Gastrocnemius medialis (tissue), 4 donors: ENCODE measurements at regions of chr14 and their contacts with region 1.

Region 1: DNA sequence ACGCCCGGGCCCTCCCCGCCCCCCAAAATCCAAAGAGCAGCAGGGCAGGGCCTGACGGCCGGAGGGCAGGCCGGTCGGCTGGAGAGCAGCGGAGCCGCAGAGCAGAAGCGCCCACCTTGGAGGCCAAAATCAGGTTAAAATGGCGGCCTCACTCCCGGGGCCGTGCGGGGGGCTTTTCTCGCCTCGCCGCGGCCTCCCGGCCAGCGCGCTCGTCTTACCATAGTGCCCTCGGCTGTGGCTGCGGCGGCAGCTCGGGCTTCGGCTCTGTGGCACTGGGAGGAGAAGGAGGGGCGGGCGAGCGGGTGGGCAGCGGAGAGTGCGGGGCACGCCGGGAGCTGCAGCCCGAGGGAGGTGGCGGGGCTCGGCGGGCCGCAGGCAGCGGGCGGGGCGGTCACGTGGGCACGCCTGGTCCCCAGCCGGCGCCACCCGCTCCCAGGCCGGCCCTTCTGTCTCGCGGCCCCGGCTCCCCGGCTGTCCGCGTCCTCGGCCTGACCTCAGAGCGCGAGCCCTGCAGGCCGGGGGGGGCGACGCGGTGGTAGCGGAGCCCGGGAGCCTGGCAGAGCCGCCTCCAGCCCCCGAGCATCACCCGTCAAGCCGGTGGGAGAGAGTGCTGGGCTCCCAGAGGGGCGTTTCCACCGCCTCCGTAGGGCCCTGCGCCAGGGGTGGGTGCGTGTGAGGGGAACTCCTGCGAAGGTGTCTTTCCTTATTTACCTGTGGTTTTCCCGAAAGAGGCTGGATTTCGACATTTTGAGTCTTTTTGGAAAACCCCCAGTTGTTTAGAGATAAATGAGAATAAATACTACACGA is at the start of gene CFL2:
- DNase-seq: peak; percentile 77 to 91
- ATAC-seq: peak; percentile 70 to 73
- H3K4me3 ChIP-seq: peak within 1 kb of the TSS; percentile 74 to 97 (median 94)
- H3K27ac ChIP-seq: peak within 1 kb of the TSS; percentile 96 to 100 (median 98)
- H3K4me1 ChIP-seq: peaks cover 34 to 45% of the 10 kb centered on the region in 2 donors
- H3K27me3 ChIP-seq: no peaks in the 10 kb centered on the region
- CTCF ChIP-seq: no peak
- POLR2A ChIP-seq: peak; percentile 87 to 89
- total RNA-seq, gene CFL2: 331 to 434 (median 371) TPM

Region 2: DNA sequence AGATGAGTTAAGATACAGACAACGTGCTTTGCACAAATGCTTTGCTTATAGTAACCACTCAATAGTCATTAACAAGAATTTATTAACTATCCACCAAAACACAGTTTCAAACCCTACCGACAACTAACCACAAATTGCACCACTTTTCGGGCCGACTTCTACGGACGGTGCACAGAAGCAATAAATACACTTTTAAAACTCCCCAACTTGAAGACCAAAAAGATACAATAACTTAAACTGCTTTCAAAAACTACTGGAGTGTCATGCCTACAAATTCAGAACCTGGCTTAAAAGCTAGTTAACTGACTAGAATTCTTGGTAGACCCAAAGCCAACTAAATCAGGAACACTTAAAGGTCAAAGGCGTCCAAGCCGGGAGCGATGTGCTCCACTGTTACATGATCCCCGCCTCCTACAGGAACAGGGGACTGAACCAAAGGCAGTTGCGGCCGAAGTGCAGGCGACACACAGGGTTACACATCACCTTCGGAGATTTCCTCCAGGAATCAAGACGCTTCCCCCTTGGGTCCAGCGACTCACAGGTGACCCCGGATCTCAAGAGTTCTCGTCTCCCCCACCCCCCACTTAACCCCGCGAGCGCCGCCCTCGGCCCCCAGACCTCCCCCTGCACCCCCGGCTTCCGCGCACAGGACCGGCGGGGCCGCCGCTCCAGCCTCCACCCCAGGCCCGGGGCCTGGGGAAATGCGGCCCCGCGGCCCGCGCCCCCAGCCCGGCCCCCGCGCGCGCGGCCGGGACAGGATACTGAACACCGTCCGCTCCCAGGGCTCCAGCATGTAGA is 253.0 kb before region 1 on chr14:
- in situ Hi-C with region 1: no loop called
- intact Hi-C with region 1: loop called (anchors 10 kb)
- DNase-seq: peak; percentile 37 to 66
- ATAC-seq: peak; percentile 73 to 78
- H3K4me3 ChIP-seq: peak overlapping the region; percentile 53 to 73 (median 62)
- H3K27ac ChIP-seq: peak overlapping the region; percentile 89 to 91 (median 90)
- H3K4me1 ChIP-seq: peaks cover 12 to 21% of the 10 kb centered on the region in 2 donors
- H3K27me3 ChIP-seq: no peaks in the 10 kb centered on the region
- CTCF ChIP-seq: no peak
- POLR2A ChIP-seq: no peak

Region 3: DNA sequence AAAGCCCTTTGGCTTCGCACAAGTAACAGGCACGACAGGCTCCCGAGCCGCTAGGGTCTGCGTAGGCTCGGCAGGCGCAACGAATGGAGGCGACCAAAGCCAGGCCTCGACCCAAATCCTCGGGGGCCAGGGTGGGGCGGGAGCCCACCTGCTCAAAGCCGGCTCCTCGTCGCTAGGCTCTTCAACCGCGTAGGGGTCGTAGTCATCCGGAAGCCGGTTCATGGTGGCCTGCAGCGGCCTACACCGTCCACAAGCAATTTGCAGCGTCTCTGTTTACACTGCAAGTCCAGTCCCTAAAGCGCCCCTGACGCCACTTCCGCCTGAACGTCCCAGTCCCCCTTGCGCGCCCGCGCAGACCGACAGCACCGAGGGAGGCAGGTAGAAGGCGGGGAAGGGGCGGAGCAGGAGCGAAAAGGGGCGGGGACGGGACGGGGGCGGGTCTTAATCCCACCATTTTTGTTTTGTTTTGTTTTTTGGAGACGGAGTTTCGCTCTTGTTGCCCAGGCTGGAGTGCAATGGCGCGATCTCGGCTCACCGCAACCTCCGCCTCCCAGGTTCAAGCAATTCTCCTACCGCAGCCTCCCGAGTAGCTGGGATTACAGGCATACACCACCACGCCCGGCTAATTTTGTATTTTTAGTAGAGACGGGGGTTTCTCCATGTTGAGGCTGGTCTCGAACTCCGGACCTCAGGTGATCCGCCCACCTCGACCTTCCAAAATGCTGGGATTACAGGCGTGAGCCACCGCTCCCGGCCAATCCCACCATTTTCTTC is 174.9 kb before region 1 on chr14 and contains the start of gene EAPP:
- in situ Hi-C with region 1: no loop called
- intact Hi-C with region 1: loop called (anchors 5 kb)
- DNase-seq: peak; percentile 99
- ATAC-seq: peak; percentile 96 to 98
- H3K4me3 ChIP-seq: peak within 1 kb of the TSS; percentile 74 to 98 (median 96)
- H3K27ac ChIP-seq: peak within 1 kb of the TSS; percentile 92 to 98 (median 97)
- H3K4me1 ChIP-seq: peaks cover 18 to 19% of the 10 kb centered on the region in 2 donors
- H3K27me3 ChIP-seq: no peaks in the 10 kb centered on the region
- CTCF ChIP-seq: peak in 2 of 5 experiments; percentile 26 to 28
- POLR2A ChIP-seq: peak; percentile 90 to 96
- total RNA-seq, gene EAPP: 25.6 to 35.7 (median 28.0) TPM

Region 4: DNA sequence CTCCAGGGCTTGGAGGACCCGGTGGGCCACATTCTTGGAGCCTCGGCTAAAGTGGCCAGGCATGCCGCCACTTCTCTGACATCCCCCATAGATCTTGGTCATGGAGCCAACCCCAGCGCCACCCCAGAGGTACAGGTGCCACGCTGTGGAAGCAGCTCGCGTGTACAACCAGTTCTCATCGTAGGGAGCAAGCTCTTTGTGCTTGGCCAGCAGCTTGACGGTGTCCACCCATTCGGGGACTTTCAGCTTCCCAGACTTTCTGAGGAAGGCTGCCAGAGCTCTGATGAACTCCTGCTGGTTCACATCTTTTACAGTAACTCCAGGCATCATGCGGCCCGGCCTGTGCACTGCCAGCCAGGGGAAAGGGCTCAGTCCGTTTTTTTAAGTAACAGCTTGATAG is 145.7 kb before region 1 on chr14:
- in situ Hi-C with region 1: no loop called
- intact Hi-C with region 1: no loop called
- DNase-seq: no peak
- ATAC-seq: no peak
- H3K4me3 ChIP-seq: no peak overlapping the region
- H3K27ac ChIP-seq: no peak overlapping the region
- H3K4me1 ChIP-seq: no peaks in the 10 kb centered on the region
- H3K27me3 ChIP-seq: no peaks in the 10 kb centered on the region
- CTCF ChIP-seq: no peak
- POLR2A ChIP-seq: no peak

Region 5: GRCh38 chr14:34593740-34594375 is 120.7 kb before region 1 on chr14:
- in situ Hi-C with region 1: no loop called
- intact Hi-C with region 1: loop called (anchors 2 kb)
- DNase-seq: peak in 1 of 2 donors; percentile 58
- ATAC-seq: peak; percentile 20 to 48
- H3K4me3 ChIP-seq: no peak overlapping the region
- H3K27ac ChIP-seq: peak overlapping the region; percentile 69 to 84 (median 80)
- H3K4me1 ChIP-seq: peaks cover 22 to 49% of the 10 kb centered on the region in 2 donors
- H3K27me3 ChIP-seq: no peaks in the 10 kb centered on the region
- CTCF ChIP-seq: no peak
- POLR2A ChIP-seq: no peak

Region 6: DNA sequence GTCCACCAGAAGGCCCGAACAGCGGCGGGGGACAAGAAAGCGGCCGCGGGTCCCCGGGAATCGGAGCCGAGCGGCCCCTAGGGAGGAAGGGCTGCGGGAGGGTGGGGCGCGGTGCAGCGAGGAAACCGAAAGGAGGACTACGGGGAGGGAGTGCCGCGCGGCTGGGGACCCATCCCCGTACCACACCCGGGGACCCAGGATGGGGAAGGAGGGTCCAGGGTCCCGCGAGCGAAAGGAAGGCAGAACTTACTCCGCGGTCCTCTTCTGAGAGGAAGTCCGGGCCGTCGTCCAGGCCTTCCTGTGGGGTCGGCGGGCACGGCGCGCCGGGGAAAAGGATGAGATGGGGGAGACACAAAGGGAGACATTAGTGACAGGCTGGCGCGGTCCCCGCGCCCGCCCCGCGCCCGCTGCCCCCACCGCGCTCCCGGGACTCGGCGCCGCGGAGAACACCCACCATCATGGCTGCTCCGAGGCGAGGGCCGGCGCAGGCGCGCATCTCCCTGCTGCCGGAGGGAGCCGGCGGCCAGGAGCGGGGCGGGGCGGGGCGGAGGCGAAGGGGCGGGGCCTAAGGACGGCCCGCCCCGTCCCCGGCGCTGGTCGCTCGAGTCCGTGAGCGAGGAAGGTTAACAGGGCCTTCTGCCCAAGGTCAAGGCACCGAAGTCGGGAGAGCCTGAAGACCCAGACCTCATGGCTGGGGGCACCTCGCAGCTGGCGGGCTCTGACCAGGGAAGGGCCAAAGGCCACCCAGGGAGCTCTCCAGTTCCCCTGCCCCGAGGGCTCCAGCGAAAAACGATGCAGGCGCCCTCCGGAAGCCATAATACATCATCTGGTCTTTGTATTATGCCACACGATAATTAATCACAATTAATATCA is 84.6 kb before region 1 on chr14 and contains the start of gene SNX6:
- in situ Hi-C with region 1: no loop called
- intact Hi-C with region 1: loop called (anchors 5 kb)
- DNase-seq: peak; percentile 66 to 79
- ATAC-seq: peak; percentile 96 to 98
- H3K4me3 ChIP-seq: peak within 1 kb of the TSS; percentile 93 to 99 (median 96)
- H3K27ac ChIP-seq: peak within 1 kb of the TSS; percentile 95 to 98 (median 98)
- H3K4me1 ChIP-seq: peaks cover 18 to 19% of the 10 kb centered on the region in 2 donors
- H3K27me3 ChIP-seq: no peaks in the 10 kb centered on the region
- CTCF ChIP-seq: no peak
- POLR2A ChIP-seq: peak; percentile 68 to 74
- total RNA-seq, gene SNX6: 73.8 to 113 (median 109) TPM

Region 7: GRCh38 chr14:34678306-34678705 is 36.2 kb before region 1 on chr14:
- in situ Hi-C with region 1: no loop called
- intact Hi-C with region 1: loop called (anchors 2 kb)
- DNase-seq: no peak
- ATAC-seq: no peak
- H3K4me3 ChIP-seq: peak overlapping the region in 1 of 4 donors; percentile 37
- H3K27ac ChIP-seq: peak overlapping the region; percentile 66 to 80 (median 71)
- H3K4me1 ChIP-seq: peaks cover 28 to 36% of the 10 kb centered on the region in 2 donors
- H3K27me3 ChIP-seq: no peaks in the 10 kb centered on the region
- CTCF ChIP-seq: no peak
- POLR2A ChIP-seq: no peak

Region 8: DNA sequence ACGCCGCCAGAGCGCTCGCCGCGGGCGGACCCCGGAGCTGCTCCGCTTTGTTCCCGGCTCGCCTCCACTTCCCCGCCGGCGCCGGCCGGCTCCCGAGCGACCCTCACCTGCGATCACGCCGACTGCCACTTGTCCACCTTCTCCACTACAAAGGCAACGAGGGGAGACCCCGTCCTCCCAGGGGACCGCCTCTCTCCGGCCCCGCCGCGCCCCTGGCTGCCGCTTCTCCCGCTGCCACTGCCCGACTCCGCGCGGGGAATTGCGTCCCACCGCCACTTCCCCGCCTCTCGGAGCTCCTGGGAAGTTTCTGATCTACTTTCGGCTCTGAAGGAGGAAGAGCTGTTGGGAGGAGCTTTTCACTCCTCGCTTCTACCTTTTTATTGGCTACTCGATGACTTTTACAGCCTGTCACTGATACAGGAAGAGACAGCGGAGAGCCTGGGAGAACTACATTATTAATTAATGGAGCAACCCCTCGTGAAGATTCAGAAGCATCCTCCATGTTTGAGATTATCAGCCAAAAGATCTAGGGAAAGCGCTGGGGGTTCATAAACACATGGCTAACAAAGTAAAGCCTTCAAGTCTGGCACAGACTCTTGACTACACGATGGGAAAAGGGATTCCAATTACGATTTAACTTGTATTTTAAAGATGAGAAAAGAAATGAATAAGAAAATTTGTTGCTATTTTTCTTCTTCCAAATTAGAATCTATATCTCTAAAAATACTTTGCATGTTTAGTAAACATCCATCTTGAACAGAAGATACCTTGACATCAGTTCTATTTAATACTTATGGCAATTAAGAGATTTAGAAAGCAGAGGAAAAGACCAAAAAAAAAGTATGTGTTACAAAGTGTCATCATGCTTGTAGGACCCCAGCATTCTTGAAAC is 160.8 kb after region 1 on chr14 and contains the start of gene BAZ1A:
- in situ Hi-C with region 1: no loop called
- intact Hi-C with region 1: loop called (anchors 2 kb)
- DNase-seq: peak; percentile 42 to 61
- ATAC-seq: peak; percentile 62
- H3K4me3 ChIP-seq: peak within 1 kb of the TSS; percentile 82 to 98 (median 90)
- H3K27ac ChIP-seq: peak within 1 kb of the TSS; percentile 98 to 100 (median 100)
- H3K4me1 ChIP-seq: peaks cover 16 to 17% of the 10 kb centered on the region in 2 donors
- H3K27me3 ChIP-seq: no peaks in the 10 kb centered on the region
- CTCF ChIP-seq: peak in 3 of 5 experiments; percentile 13 to 42 (median 37)
- POLR2A ChIP-seq: peak; percentile 84 to 95
- total RNA-seq, gene BAZ1A: 11.6 to 18.5 (median 14.7) TPM